Keratinocyte (primary cell): ENCODE measurements at regions of chr6 and their contacts with region 1.

Region 1: DNA sequence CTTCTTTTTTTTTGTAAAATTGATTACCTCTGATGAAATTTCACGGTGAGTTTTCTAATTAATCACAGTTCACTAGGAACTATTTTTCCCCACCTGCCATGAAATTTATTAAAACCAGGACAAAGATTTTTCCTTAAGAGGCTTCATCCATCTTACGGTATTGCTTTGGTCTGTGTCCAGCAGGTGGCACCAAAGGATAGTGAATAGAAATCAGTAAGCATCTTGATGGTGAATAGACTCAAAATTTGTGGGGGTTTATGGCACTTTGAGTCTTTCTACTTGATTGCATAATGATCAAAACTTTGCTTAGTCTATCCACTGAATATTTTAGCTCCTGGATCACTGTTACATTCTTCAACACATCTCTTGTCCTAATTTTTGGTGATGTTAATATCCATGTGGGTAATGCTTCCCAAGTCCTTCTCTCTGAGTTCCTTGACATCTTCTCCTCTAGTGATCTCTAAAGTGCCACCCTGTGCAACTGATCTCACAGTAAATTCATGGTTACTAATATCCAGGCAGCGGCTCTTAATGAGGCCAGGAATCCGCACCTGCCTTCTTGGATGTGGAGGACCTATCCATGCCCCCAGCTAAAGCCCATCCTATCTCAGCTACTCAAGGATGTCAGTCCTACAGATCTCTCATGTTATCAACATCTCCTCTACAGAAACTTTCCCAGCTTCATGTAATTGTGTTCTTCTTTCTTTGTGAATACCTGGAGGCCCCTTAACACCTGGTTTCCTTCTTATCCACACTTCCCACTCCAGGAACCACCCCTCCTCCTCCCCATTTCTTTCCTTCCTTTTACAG is 54.5 kb downstream of the STMND1 start:
- DNase-seq: peak; percentile 44
- H3K4me3 ChIP-seq: no peak overlapping the region
- H3K27ac ChIP-seq: no peak overlapping the region
- H3K4me1 ChIP-seq: no peaks in the 10 kb centered on the region
- H3K27me3 ChIP-seq: peaks cover 7% of the 10 kb centered on the region
- CTCF ChIP-seq: peak; percentile 46 to 70 (median 48)

Region 2: DNA sequence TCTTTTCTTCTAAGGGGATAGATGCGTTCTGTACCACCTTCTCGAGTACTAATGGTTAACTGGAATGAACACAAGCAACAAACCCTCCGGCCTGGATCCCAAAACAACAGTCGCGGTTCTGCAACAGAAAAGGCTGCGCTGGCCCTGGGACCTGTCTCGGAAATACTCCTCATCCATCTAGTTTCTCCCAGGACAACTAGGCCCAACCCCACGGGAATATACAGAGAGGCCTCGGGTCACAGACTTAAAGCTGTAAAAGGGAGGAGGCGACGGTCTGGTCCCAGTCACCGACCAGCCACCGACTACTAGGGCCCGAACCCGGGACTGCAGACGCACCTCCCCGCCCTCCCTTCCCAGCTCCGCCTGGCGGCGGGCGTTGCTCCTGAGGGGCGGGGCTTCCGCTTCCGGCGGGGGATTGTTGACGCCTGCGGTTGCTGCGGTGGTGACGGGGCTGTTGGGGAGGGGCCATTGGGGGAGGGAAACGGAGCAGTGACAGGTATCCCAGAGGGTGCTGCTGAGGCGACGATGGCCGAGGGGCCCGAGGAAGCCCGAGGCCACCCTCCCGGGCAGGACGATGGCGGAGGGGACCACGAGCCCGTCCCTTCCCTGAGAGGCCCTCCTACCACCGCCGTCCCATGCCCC is 443.7 kb after region 1 on chr6 and contains the start of gene FAM8A1:
- dilution Hi-C with region 1: loop called (anchors 25 kb)
- DNase-seq: peak; percentile 33
- H3K4me3 ChIP-seq: peak within 1 kb of the TSS; percentile 60 to 83 (median 67)
- H3K27ac ChIP-seq: peak within 1 kb of the TSS; percentile 47
- H3K4me1 ChIP-seq: peaks cover 3% of the 10 kb centered on the region
- H3K27me3 ChIP-seq: no peaks in the 10 kb centered on the region
- CTCF ChIP-seq: peak in 2 of 3 experiments; percentile 11 to 75
- polyA plus RNA-seq, gene FAM8A1: 4.2 to 9.1 TPM (median 8.4 TPM) in 3 replicates